CD14-positive monocyte (primary cell): ENCODE measurements at regions of chr6 and their contacts with region 1.

Region 1: GRCh38 chr6:110039364-110039980 is 61.4 kb downstream of the GPR6 start:
- DNase-seq: peak; percentile 83
- H3K4me3 ChIP-seq: peak overlapping the region; percentile 46 to 77 (median 70)
- H3K4me3 Mint-ChIP-seq: peak overlapping the region; percentile 93 to 96
- H3K27ac ChIP-seq: peak overlapping the region; percentile 14 to 52
- H3K27ac Mint-ChIP-seq: peak overlapping the region; percentile 63 to 88 (median 84)
- H3K4me1 ChIP-seq: peaks cover 14 to 21% of the 10 kb centered on the region in 2 donors
- H3K4me1 Mint-ChIP-seq: peaks cover 18% of the 10 kb centered on the region
- H3K27me3 ChIP-seq: no peaks in the 10 kb centered on the region
- H3K27me3 Mint-ChIP-seq: peaks cover 0 to 7% (median 6%) of the 10 kb centered on the region in 3 donors
- CTCF ChIP-seq: peak; percentile 80

Region 2: GRCh38 chr6:110398778-110399177 is 359.3 kb after region 1 on chr6:
- intact Hi-C with region 1: loop called in 1 of 2 experiments (anchors 10 kb)
- DNase-seq: no peak
- H3K4me3 ChIP-seq: no peak overlapping the region
- H3K4me3 Mint-ChIP-seq: peak overlapping the region in 1 of 2 donors; percentile 17
- H3K27ac ChIP-seq: no peak overlapping the region
- H3K27ac Mint-ChIP-seq: peak overlapping the region in 1 of 7 donors; percentile 8
- H3K4me1 ChIP-seq: peaks cover 3 to 5% of the 10 kb centered on the region in 2 donors
- H3K4me1 Mint-ChIP-seq: peaks cover 13% of the 10 kb centered on the region
- H3K27me3 ChIP-seq: no peaks in the 10 kb centered on the region
- H3K27me3 Mint-ChIP-seq: peaks cover 0 to 2% (median 2%) of the 10 kb centered on the region in 3 donors
- CTCF ChIP-seq: no peak